ENCODE measurements at regions of chr7 and their contacts with region 1.

Region 1: GRCh38 chr7:82729172-82730030 is 285.8 kb upstream of the CACNA2D1 start:
- DNase-seq: no peak

Region 2: DNA sequence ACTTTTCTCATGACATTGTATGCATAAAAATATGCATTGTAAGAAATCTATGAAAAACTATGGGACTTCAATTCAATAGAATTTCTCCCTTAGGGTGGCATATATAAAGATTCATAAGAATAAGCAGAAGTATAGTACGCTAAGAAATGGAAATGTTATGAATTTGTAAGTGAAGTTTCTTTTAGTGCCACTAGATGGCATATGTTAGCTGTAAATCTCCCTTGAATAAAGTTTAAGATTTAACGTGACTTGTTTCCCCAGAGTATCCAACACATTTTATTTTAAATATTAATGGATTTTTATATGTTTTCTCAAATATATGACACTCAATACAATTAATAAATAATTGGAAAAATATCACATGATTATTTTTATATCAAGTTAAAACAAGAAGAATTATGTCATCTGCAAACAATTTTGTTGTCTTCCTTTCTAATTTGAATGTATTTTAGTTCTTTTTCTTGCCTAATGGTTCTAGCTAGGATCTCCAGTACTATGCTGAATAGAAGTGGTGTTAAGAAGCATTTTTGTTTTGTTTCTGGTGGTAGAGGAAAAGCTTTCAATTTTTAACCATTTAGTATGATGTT is 1246.7 kb before region 1 on chr7:
- intact Hi-C with region 1: loop called (anchors 5 kb)
- DNase-seq: no peak

Region 3: DNA sequence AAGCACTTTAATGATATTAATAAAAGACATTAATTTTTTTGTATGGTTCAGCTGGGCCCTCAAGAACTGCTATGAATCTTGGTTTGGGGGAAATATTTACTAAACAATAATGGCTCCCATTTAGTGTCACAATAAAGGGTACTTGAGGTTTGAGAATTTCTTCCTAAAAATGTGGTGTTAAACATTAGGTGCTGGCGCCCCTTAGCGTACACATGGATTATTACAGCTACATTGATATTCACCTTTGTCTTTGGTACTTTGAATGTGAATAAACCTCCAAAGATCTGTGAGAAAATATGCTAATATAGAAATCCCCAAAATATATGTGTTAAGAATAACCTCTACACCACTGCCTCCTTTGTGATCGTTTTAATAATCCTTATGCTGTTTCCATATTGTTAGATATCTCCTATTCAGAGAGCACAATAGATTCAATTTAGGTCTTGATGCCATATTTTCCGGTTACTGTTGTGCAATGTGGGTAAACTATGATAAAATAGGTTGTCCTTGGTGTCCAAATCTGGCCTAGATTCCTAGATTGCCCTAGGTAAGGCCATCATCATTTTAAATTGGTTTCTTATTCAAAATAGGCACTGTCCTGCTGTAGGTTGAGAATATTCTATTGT is 124.0 kb before region 1 on chr7:
- intact Hi-C with region 1: loop called (anchors 5 kb)
- DNase-seq: no peak

Region 4: GRCh38 chr7:82964150-82964882 is 234.9 kb after region 1 on chr7:
- intact Hi-C with region 1: no loop called
- DNase-seq: no peak

Measured in cardiac septum (tissue), 1 donor.